ENCODE measurements at regions of chr1 and their contacts with region 1.

Region 1: GRCh38 chr1:227762233-227762911 is 27.1 kb downstream of the SNAP47 start:
- DNase-seq: peak; percentile 77 to 93 (median 90)
- ATAC-seq: peak; percentile 61
- H3K4me3 ChIP-seq: no peak overlapping the region
- H3K4me3 Mint-ChIP-seq: peak overlapping the region; percentile 64
- H3K27ac ChIP-seq: peak overlapping the region in 1 of 2 experiments; percentile 49
- H3K27ac Mint-ChIP-seq: peak overlapping the region; percentile 90
- H3K4me1 ChIP-seq: peaks cover 66% of the 10 kb centered on the region
- H3K4me1 Mint-ChIP-seq: peaks cover 74% of the 10 kb centered on the region
- H3K27me3 ChIP-seq: no peaks in the 10 kb centered on the region
- H3K27me3 Mint-ChIP-seq: no peaks in the 10 kb centered on the region
- CTCF ChIP-seq: peak; percentile 91

Region 2: DNA sequence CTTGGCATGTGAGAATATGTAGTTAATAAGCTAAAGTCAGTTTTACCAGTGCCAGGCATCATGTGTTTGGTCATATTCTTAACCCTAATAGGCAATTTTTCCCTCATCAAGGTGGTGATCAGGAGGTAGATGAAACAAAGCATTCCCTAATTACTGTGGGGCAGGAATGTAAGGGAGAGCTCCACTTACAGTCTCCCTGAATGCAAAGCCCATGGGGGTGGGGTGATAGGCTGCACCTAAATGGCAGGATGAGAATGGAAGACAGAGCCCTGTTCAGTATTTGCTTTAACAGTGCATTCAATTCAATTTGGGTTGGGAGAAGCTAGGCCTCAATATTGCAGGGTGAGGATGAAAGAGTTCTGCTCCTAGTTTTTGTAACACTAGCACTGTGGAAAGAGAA is 175.6 kb before region 1 on chr1:
- CTCF ChIA-PET with region 1: no interaction called
- POLR2A ChIA-PET with region 1: no interaction called
- intact Hi-C with region 1: no loop called
- DNase-seq: no peak
- ATAC-seq: no peak
- H3K4me3 ChIP-seq: no peak overlapping the region
- H3K4me3 Mint-ChIP-seq: no peak overlapping the region
- H3K27ac ChIP-seq: no peak overlapping the region
- H3K27ac Mint-ChIP-seq: no peak overlapping the region
- H3K4me1 ChIP-seq: no peaks in the 10 kb centered on the region
- H3K4me1 Mint-ChIP-seq: peaks cover 2% of the 10 kb centered on the region
- H3K27me3 ChIP-seq: no peaks in the 10 kb centered on the region
- H3K27me3 Mint-ChIP-seq: no peaks in the 10 kb centered on the region
- CTCF ChIP-seq: no peak

Region 3: DNA sequence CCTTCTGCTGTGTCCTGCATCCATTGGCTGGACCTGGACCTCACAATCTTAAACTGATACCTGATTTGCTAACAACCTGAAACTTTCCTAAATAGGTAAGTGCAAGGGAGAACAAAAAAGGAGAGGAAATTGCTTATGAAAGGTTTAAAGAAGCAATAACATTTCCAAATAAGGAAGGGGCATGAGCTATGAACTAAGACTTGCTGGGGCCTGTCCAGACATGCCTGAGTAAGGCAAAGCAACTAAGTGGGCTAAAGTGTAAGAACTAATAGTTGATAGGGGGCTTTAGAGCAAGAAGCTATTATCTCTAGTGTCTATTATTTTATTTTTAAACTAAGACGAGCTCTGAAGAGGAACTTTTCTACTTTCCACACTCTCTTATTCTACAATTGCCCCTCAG is 38.9 kb before region 1 on chr1:
- CTCF ChIA-PET with region 1: no interaction called
- POLR2A ChIA-PET with region 1: no interaction called
- intact Hi-C with region 1: no loop called
- DNase-seq: no peak
- ATAC-seq: no peak
- H3K4me3 ChIP-seq: no peak overlapping the region
- H3K4me3 Mint-ChIP-seq: no peak overlapping the region
- H3K27ac ChIP-seq: no peak overlapping the region
- H3K27ac Mint-ChIP-seq: no peak overlapping the region
- H3K4me1 ChIP-seq: peaks cover 5% of the 10 kb centered on the region
- H3K4me1 Mint-ChIP-seq: peaks cover 12% of the 10 kb centered on the region
- H3K27me3 ChIP-seq: no peaks in the 10 kb centered on the region
- H3K27me3 Mint-ChIP-seq: peaks cover 2% of the 10 kb centered on the region
- CTCF ChIP-seq: no peak

Region 4: GRCh38 chr1:227734856-227735538 is 27.4 kb before region 1 on chr1 and contains the starts of genes JMJD4 and SNAP47:
- CTCF ChIA-PET with region 1: interaction called, 5 read pairs
- POLR2A ChIA-PET with region 1: interaction called, 6 read pairs
- intact Hi-C with region 1: loop called in 1 of 2 experiments (anchors 1 kb)
- DNase-seq: peak; percentile 82 to 97 (median 92)
- ATAC-seq: peak; percentile 89
- H3K4me3 ChIP-seq: peak within 1 kb of the TSS; percentile 71 to 95
- H3K4me3 Mint-ChIP-seq: peak within 1 kb of the TSS; percentile 89
- H3K27ac ChIP-seq: peak within 1 kb of the TSS; percentile 71 to 76
- H3K27ac Mint-ChIP-seq: peak within 1 kb of the TSS; percentile 88
- H3K4me1 ChIP-seq: peaks cover 19% of the 10 kb centered on the region
- H3K4me1 Mint-ChIP-seq: peaks cover 51% of the 10 kb centered on the region
- H3K27me3 ChIP-seq: no peaks in the 10 kb centered on the region
- H3K27me3 Mint-ChIP-seq: no peaks in the 10 kb centered on the region
- CTCF ChIP-seq: no peak
- total RNA-seq, gene JMJD4: 7.4 to 9.5 TPM
- total RNA-seq, gene SNAP47: 11.0 to 13.8 TPM

Region 5: GRCh38 chr1:227787513-227788270 is 25.3 kb after region 1 on chr1:
- CTCF ChIA-PET with region 1: interaction called, 7 read pairs
- POLR2A ChIA-PET with region 1: interaction called, 24 read pairs
- intact Hi-C with region 1: loop called (anchors 1 kb)
- DNase-seq: peak; percentile 92 to 98 (median 95)
- ATAC-seq: peak; percentile 93
- H3K4me3 ChIP-seq: peak overlapping the region; percentile 75 to 97
- H3K4me3 Mint-ChIP-seq: peak overlapping the region; percentile 83
- H3K27ac ChIP-seq: peak overlapping the region in 1 of 2 experiments; percentile 52
- H3K27ac Mint-ChIP-seq: peak overlapping the region; percentile 71
- H3K4me1 ChIP-seq: peaks cover 21% of the 10 kb centered on the region
- H3K4me1 Mint-ChIP-seq: peaks cover 21% of the 10 kb centered on the region
- H3K27me3 ChIP-seq: peaks cover 0 to 5% of the 10 kb centered on the region in 2 experiments
- H3K27me3 Mint-ChIP-seq: no peaks in the 10 kb centered on the region
- CTCF ChIP-seq: no peak

Region 6: DNA sequence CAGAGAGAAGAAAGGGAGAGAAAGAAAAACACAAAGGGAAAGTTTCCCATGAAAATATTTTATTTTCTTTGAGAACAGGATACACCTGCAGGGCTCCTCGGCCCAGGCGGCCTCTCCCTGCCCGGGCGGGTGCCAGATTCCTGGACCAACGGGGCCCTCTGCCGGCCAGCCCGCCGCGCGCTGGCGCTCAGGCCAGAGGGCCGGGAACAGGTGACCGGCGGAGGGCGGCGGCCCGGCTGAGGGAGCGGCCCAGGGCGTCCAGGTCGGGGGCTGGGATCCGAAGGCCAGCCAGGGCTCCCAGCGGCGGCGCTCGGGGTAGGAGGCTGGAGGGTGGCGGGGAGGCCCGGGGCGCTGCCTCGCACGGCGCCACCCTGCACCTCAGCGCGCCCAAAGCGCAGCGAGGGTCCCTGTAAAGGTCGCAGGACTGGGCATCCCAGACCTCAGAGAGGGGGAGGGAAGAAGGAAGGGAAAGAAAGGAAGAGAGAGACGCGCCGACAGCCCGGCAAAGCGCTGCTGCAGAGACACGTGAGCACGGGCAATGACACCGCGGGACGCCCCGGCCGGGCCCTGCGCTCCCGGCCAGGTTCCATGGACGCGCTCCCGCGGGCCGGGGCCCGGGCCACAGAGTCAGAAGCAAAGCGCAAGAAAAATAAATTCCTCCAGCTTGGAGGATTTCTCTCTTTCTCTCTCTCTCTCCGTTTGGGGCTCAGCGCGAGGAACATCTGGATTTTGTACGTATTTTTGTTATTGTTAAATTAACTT is 184.4 kb after region 1 on chr1:
- CTCF ChIA-PET with region 1: interaction called, 264 read pairs
- POLR2A ChIA-PET with region 1: interaction called, 16 read pairs
- intact Hi-C with region 1: loop called in 1 of 2 experiments (anchors 1 kb)
- DNase-seq: peak in 8 of 9 experiments; percentile 45 to 82 (median 60)
- ATAC-seq: peak; percentile 64
- H3K4me3 ChIP-seq: peak overlapping the region; percentile 13 to 31
- H3K4me3 Mint-ChIP-seq: peak overlapping the region; percentile 74
- H3K27ac ChIP-seq: no peak overlapping the region
- H3K27ac Mint-ChIP-seq: no peak overlapping the region
- H3K4me1 ChIP-seq: peaks cover 19% of the 10 kb centered on the region
- H3K4me1 Mint-ChIP-seq: peaks cover 13% of the 10 kb centered on the region
- H3K27me3 ChIP-seq: peaks cover 14% of the 10 kb centered on the region in 2 experiments
- H3K27me3 Mint-ChIP-seq: peaks cover 16% of the 10 kb centered on the region
- CTCF ChIP-seq: peak; percentile 56

Region 7: GRCh38 chr1:228226956-228227791 is 464.8 kb after region 1 on chr1:
- CTCF ChIA-PET with region 1: no interaction called
- POLR2A ChIA-PET with region 1: no interaction called
- intact Hi-C with region 1: no loop called
- DNase-seq: no peak
- ATAC-seq: no peak
- H3K4me3 ChIP-seq: no peak overlapping the region
- H3K4me3 Mint-ChIP-seq: no peak overlapping the region
- H3K27ac ChIP-seq: no peak overlapping the region
- H3K27ac Mint-ChIP-seq: no peak overlapping the region
- H3K4me1 ChIP-seq: no peaks in the 10 kb centered on the region
- H3K4me1 Mint-ChIP-seq: no peaks in the 10 kb centered on the region
- H3K27me3 ChIP-seq: no peaks in the 10 kb centered on the region
- H3K27me3 Mint-ChIP-seq: no peaks in the 10 kb centered on the region
- CTCF ChIP-seq: no peak